GM10248 (cell line): ENCODE measurements at regions of chr9 and their contacts with region 1.

Region 1: GRCh38 chr9:107425101-107426045 is 64.2 kb downstream of the KLF4 start:
- DNase-seq: peak; percentile 73
- CTCF ChIP-seq: peak; percentile 87

Region 2: DNA sequence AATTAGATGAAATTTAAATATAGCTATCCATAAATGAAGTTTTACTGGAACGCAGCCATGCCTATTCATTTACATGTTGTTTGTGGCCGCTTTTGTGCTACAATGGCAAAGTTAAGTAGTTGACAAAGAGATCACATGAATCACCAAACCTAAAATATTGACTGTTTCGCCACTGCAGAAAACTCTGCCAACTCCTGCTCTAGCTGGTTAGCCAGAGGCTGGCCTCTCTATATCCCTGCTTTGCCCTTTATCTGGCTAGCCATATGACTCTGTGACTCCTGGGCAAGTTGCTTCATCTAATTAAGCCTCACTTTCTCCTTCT is 27.7 kb before region 1 on chr9:
- CTCF ChIA-PET with region 1: interaction called, 36 read pairs
- POLR2A ChIA-PET with region 1: no interaction called
- DNase-seq: no peak
- CTCF ChIP-seq: no peak

Region 3: DNA sequence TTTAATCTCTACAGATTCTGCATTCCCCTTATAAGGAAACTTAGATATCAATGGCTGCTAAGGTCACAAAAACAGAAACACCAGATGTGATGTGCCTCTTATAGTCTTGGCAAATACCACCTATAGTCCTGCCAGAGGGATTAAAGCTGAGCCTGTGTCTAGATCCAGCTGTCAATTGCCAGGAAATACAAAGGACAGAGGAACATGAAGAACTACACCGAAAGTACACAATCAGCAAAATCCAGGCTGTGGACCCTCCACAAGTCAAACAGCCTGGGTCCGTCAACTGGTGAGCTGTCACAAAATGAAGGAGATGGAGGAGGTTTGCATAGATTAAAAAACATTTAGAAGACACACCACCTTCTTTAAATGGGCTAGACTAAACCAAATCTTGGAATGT is 21.2 kb before region 1 on chr9:
- CTCF ChIA-PET with region 1: interaction called, 36 read pairs
- POLR2A ChIA-PET with region 1: no interaction called
- DNase-seq: no peak
- CTCF ChIP-seq: no peak

Region 4: DNA sequence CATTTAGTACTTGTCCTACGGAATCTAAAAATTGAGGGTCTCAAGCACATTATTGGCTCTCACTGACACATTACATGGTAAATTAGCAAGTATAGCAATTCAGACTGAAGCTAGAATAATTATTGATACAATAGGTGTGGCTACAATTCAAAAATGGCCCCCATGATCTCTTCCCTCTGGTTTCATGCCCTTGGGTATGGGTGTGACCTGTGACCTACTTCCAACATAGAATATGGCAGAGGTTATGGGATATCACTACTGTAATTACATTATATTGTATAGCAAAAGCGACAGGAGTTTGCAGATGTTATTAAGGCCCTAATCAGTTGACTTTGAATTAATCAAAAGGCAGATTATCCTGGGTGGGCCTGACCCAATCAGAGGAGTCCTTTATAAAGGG is 12.1 kb before region 1 on chr9:
- CTCF ChIA-PET with region 1: interaction called, 17 read pairs
- POLR2A ChIA-PET with region 1: no interaction called
- DNase-seq: no peak
- CTCF ChIP-seq: no peak

Region 5: GRCh38 chr9:107438211-107439090 is 13.1 kb after region 1 on chr9:
- CTCF ChIA-PET with region 1: interaction called, 20 read pairs
- POLR2A ChIA-PET with region 1: no interaction called
- DNase-seq: no peak
- CTCF ChIP-seq: no peak

Region 6: DNA sequence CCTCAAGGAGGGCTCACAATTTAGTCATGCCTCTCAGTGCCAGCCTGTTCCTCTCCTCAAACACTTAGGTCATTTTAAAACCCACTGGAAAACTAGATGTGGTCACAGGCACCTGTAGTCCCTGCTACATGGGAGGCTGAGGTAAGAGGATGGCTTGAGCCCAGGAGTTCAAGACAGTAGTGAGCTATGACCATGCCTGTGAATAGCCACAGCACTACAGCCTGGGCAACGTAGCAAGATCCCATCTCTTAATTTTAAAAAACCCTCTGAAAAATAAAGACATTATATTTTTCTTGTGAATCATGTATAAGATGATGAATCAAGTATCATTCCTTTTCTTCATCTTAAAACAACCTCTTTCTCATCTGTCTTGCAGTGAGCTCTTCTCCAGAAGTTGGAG is 18.4 kb after region 1 on chr9:
- CTCF ChIA-PET with region 1: interaction called, 20 read pairs
- POLR2A ChIA-PET with region 1: no interaction called
- DNase-seq: no peak
- CTCF ChIP-seq: no peak

Region 7: GRCh38 chr9:108565651-108566378 is 1140.4 kb after region 1 on chr9:
- CTCF ChIA-PET with region 1: interaction called, 24 read pairs
- POLR2A ChIA-PET with region 1: no interaction called
- DNase-seq: peak; percentile 53
- CTCF ChIP-seq: peak; percentile 70